ENCODE measurements at regions of chr2 and their contacts with region 1.

Region 1: DNA sequence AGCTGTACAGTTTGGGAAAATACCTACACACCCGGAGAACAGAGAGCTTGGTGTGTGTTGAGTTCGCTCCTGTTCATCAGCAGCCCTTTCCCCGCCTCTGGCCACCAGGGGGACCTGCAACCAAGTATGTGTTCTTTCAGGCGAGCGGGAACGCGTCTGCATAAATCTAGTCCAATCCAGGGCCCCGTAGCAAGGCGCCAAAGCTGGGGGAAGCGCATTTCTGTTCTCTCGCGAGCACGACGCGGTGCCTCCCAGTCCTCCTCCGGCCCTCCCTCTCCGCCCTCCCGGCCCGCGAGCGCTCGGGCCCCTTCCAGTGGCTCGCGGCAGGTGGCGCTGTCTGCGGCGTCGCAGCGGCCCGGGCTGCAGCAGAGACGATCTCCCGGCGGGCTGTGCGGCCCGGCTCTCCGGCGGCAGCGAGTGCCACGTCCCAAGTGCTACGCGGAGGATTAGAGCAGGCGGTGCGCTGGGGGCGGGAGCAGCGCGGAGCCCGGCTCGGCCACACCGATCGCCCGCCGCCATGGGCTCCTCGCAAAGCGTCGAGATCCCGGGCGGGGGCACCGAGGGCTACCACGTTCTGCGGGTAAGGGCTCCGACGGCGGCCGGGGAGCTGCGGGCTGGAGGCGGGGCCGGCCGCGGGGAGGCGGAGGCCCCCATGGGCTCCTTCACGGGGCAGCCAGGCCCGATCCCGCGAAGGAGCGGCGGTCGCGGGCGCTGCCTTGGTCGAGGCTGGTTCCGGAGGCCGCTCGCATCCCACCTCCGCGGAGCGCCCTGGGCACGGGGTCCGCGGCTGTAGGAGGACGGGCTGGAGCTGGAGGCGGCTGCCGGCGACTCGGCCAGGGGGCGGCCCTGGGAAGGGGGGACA is at the start of gene GORASP2:
- DNase-seq: peak; percentile 99
- ATAC-seq: peak; percentile 96
- H3K4me3 ChIP-seq: peak within 1 kb of the TSS; percentile 88 to 90
- H3K27ac ChIP-seq: peak within 1 kb of the TSS; percentile 99
- H3K4me1 ChIP-seq: peaks cover 12% of the 10 kb centered on the region
- H3K27me3 ChIP-seq: no peaks in the 10 kb centered on the region
- CTCF ChIP-seq: peak; percentile 100
- total RNA-seq, gene GORASP2: 62.5 TPM

Region 2: DNA sequence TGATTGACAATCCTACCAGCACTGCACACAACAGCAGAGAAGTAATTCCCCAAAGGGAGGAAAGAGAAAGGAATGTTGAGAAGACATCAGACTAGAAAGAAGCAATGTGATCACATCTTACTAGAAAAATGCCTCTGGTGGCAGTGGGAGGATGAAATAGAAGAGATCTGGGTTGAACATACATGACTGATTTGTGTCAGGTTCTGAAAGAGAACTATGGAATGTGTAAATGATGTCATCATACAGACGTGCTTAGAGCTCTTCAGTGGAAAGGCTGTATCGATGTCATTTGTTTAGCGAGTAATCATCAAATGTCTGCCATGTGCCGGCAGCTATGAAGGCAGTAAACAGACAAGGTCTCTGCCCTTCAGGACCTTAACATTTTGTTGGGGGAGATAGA is 24.9 kb after region 1 on chr2:
- CTCF ChIA-PET with region 1: interaction called, 19 read pairs
- POLR2A ChIA-PET with region 1: interaction called, 3 read pairs
- in situ Hi-C with region 1: no loop called
- intact Hi-C with region 1: no loop called
- DNase-seq: no peak
- ATAC-seq: no peak
- H3K4me3 ChIP-seq: no peak overlapping the region
- H3K27ac ChIP-seq: no peak overlapping the region
- H3K4me1 ChIP-seq: 0 out of 2 replicates have a peak, but pooled peaks cover 2% of the 10 kb centered on the region
- H3K27me3 ChIP-seq: no peaks in the 10 kb centered on the region
- CTCF ChIP-seq: no peak

Region 3: GRCh38 chr2:170966648-170967436 is 37.8 kb after region 1 on chr2:
- CTCF ChIA-PET with region 1: no interaction called
- POLR2A ChIA-PET with region 1: no interaction called
- in situ Hi-C with region 1: no loop called
- intact Hi-C with region 1: no loop called
- DNase-seq: no peak
- ATAC-seq: peak; percentile 85; the same call in 1 of the 2 replicates
- H3K4me3 ChIP-seq: no peak overlapping the region
- H3K27ac ChIP-seq: no peak overlapping the region
- H3K4me1 ChIP-seq: no peaks in the 10 kb centered on the region
- H3K27me3 ChIP-seq: no peaks in the 10 kb centered on the region
- CTCF ChIP-seq: peak; percentile 63